HEK293 (cell line): ENCODE measurements at regions of chr1 and their contacts with region 1.

Region 1: GRCh38 chr1:203504397-203505250 is 10.7 kb downstream of the OPTC start:
- H3K4me3 ChIP-seq: no peak overlapping the region
- H3K27ac ChIP-seq: no peak overlapping the region
- H3K4me1 ChIP-seq: no peaks in the 10 kb centered on the region
- CTCF ChIP-seq: peak; percentile 84

Region 2: DNA sequence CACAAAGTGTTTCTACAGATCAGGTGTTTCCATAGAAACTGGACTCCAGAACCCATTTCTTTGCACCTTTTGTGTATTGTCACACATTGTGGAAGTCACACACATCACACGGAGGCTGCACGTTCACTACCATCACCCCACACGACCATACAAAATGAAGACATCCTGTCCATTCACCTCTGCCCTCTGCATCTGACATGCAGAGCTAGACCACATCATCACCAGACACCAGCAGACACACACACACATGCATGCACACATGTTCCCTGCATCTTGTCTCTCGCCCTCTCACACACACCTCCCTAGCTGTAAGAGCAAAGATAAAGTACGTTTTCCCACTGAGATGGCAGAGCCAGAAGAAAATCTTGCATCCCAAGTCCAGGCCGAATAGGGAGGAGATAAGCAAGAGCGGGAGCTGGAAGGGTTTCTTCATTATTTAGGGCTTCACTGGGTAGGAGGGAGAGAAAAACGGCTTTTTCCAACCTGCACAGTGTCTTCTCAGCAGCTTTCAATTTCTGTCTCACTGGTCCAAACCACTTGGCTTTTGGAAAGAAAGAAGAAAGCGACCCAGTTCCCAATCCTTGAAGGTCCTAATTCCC is 28.3 kb before region 1 on chr1:
- CTCF ChIA-PET with region 1: no interaction called
- POLR2A ChIA-PET with region 1: no interaction called
- H3K4me3 ChIP-seq: no peak overlapping the region
- H3K27ac ChIP-seq: no peak overlapping the region
- H3K4me1 ChIP-seq: peaks cover 3% of the 10 kb centered on the region; the same call in 1 of the 2 replicates
- CTCF ChIP-seq: no peak

Region 3: GRCh38 chr1:203486618-203487370 is 17.8 kb before region 1 on chr1:
- CTCF ChIA-PET with region 1: interaction called, 34 read pairs
- POLR2A ChIA-PET with region 1: interaction called, 3 read pairs
- H3K4me3 ChIP-seq: no peak overlapping the region
- H3K27ac ChIP-seq: peak overlapping the region; percentile 10; the same call in 1 of the 2 replicates
- H3K4me1 ChIP-seq: no peaks in the 10 kb centered on the region
- CTCF ChIP-seq: no peak

Region 4: GRCh38 chr1:203607533-203607873 is 102.9 kb after region 1 on chr1:
- CTCF ChIA-PET with region 1: interaction called, 17 read pairs
- POLR2A ChIA-PET with region 1: interaction called, 5 read pairs
- H3K4me3 ChIP-seq: no peak overlapping the region
- H3K27ac ChIP-seq: no peak overlapping the region
- H3K4me1 ChIP-seq: no peaks in the 10 kb centered on the region; the same call in 1 of the 2 replicates
- CTCF ChIP-seq: no peak

Region 5: DNA sequence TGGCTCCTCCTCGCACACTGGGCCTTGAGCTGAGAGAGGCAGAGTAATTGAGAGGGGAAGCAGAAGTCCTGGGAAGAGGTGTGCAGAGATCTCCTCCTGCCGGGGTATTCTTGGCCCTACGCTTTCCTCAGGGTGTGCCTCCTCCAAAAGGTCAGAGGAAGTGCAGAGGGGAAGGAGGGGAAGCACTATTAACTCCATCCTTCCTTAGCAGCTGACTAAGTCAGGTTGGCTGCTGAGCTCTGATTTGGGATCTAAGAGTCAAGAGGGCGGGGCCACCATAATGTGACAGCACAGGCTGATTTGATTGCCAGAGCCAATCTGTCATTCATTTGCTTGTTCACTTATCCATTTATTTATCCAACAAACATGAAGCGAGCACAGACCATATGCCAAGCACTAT is 134.3 kb after region 1 on chr1:
- CTCF ChIA-PET with region 1: interaction called, 23 read pairs
- POLR2A ChIA-PET with region 1: no interaction called
- H3K4me3 ChIP-seq: no peak overlapping the region
- H3K27ac ChIP-seq: no peak overlapping the region
- H3K4me1 ChIP-seq: no peaks in the 10 kb centered on the region
- CTCF ChIP-seq: no peak

Region 6: GRCh38 chr1:203702130-203702577 is 197.5 kb after region 1 on chr1:
- CTCF ChIA-PET with region 1: interaction called, 205 read pairs
- POLR2A ChIA-PET with region 1: interaction called, 4 read pairs
- H3K4me3 ChIP-seq: no peak overlapping the region
- H3K27ac ChIP-seq: no peak overlapping the region
- H3K4me1 ChIP-seq: no peaks in the 10 kb centered on the region
- CTCF ChIP-seq: peak; percentile 85